ENCODE measurements at regions of chr3 and their contacts with region 1.

Region 1: DNA sequence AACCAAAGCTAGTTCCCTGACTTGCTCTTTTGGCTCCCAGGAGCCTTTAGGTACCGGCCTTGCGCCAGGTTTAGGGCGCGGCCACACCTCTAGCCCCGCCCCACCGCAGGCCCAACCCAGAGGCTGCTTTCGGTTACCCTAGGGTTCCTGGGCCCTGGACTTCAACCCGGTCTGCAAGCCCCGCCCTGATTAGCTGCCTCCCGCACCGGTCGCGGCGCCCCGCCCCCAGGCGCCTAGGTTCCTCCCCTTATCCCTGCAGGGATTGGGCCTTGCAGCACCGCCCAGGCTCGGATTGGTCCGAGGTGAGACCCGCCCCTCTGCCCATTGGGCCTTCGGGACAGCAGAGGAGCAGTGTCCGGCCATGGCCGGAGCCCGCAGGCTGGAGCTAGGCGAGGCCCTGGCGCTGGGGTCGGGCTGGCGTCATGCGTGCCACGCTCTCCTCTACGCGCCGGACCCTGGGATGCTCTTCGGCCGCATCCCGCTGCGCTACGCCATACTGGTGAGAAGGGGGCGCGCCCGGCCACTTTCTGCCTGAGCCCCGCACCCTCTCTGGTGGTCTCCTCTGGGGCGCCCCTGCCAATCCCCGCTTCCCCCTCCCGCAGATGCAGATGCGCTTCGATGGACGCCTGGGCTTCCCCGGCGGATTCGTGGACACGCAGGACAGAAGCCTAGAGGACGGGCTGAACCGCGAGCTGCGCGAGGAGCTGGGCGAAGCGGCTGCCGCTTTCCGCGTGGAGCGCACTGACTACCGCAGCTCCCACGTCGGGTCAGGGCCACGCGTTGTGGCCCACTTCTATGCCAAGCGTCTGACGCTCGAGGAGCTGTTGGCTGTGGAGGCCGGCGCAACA is at the start of gene NUDT16:
- DNase-seq: peak; percentile 100
- total RNA-seq, gene NUDT16: 15.8 to 30.9 TPM

Region 2: DNA sequence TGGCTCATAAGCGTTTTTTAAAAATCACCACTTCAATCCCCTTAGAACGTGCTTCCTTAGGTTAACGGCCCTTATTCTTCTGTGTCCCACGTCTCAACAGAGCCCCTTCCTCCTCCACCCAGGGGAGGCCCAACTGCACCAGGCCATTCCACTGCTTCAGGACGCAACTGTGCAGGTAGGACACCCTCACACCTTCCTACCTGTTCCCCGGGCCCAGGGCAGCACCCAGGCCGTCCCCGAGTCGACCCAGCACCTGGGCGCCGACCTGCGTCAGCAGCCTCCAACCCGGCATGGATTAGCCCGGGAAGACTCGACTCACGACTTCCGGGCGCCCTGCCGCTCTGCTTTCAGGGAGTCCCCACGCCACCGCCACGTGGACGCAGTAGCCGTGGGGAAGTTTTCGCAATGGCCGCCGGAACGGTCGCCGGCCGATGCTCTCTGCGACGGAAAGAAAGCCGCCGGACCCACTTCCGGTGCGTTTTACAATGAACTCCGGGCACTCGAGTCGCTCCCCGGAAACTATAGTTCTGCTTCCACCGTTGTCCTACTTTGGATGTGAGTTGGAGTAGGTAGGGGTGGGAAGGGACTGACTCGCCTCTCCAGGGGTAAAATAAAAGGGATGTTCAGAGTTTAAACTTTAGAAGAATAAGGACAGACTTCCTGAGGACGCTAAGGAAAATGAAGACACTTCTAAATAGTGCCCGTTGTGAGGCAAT is 121.0 kb after region 1 on chr3 and contains the start of gene MRPL3:
- intact Hi-C with region 1: loop called in 1 of 2 experiments (anchors 10 kb)
- DNase-seq: peak; percentile 96
- total RNA-seq, gene MRPL3: 56.5 to 61.4 TPM

Measured in posterior vena cava (tissue), 2 donors.